ENCODE measurements at regions of chr16 and their contacts with region 1.

Region 1: GRCh38 chr16:2980227-2981086 is at the start of gene PKMYT1:
- DNase-seq: peak; percentile 63 to 98
- H3K4me3 ChIP-seq: peak within 1 kb of the TSS; percentile 80
- H3K27ac ChIP-seq: peak within 1 kb of the TSS; percentile 36; the same call in 1 of the 2 replicates
- H3K4me1 ChIP-seq: peaks cover 22% of the 10 kb centered on the region
- H3K27me3 ChIP-seq: no peaks in the 10 kb centered on the region
- CTCF ChIP-seq: no peak
- total RNA-seq, gene PKMYT1: 105 and 112 TPM in 2 replicates

Region 2: DNA sequence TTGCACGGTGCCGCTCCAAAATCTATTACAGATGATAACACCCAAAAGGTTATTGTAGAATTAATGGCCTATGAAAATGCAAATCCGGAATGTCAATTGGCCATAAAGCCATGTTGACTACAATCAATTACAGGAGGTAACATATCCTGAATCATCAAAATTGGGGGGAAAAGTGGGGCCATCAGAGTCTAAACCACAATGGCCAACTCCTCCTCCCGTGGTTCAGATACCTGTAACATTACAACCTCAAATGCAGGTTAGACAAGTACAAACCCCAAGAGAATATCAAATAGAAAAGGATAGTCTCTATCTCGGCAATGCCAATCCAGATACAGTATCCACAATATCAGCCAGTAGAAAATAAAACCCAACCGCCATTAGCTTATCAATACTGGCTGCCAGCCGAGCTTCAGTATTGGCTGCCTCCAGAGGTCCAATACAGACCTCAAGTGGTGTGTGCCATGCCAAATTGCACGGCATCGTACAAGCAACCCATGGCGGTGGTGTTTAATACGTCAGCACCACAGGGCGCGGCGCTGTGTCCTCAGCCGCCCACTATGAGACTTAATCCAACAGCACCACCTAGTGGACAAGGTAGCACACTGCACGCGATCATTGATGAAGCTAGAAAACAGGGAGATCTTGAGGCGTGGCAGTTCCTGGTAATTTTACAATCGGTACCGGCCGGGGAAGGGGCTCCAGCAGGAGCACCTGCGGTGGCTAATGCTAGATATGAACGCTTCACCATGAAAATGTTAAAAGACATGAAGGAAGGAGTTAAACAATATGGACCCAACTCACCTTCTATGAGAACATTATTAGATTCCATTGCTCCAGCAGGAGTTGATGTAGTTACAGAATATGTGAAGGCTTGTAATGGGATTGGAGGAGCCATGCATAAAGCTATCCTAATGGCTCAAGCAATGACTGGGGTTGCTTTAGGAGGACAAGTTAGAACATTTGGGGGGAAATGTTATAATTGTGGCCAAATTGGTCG is 53.5 kb before region 1 on chr16:
- CTCF ChIA-PET with region 1: no interaction called
- POLR2A ChIA-PET with region 1: no interaction called
- intact Hi-C with region 1: loop called (anchors 1 kb)
- DNase-seq: peak; percentile 70 to 84
- H3K4me3 ChIP-seq: no peak overlapping the region
- H3K27ac ChIP-seq: no peak overlapping the region
- H3K4me1 ChIP-seq: no peaks in the 10 kb centered on the region
- H3K27me3 ChIP-seq: no peaks in the 10 kb centered on the region
- CTCF ChIP-seq: peak; percentile 96

Region 3: GRCh38 chr16:2968738-2969544 is 11.5 kb before region 1 on chr16 and contains the start of gene PAQR4:
- CTCF ChIA-PET with region 1: no interaction called
- POLR2A ChIA-PET with region 1: interaction called, 3 read pairs
- intact Hi-C with region 1: loop called (anchors 2 kb)
- DNase-seq: peak; percentile 68 to 95
- H3K4me3 ChIP-seq: peak within 1 kb of the TSS; percentile 77
- H3K27ac ChIP-seq: no peak within 1 kb of the TSS
- H3K4me1 ChIP-seq: peaks cover 5% of the 10 kb centered on the region
- H3K27me3 ChIP-seq: no peaks in the 10 kb centered on the region
- CTCF ChIP-seq: no peak
- total RNA-seq, gene PAQR4: 33.6 and 40.7 TPM in 2 replicates

Region 4: GRCh38 chr16:3003582-3004302 is 23.3 kb after region 1 on chr16:
- CTCF ChIA-PET with region 1: interaction called, 3 read pairs
- POLR2A ChIA-PET with region 1: no interaction called
- intact Hi-C with region 1: loop called (anchors 1 kb)
- DNase-seq: peak; percentile 96 to 100
- H3K4me3 ChIP-seq: no peak overlapping the region; the same call in 1 of the 2 replicates
- H3K27ac ChIP-seq: no peak overlapping the region
- H3K4me1 ChIP-seq: peaks cover 33% of the 10 kb centered on the region
- H3K27me3 ChIP-seq: no peaks in the 10 kb centered on the region
- CTCF ChIP-seq: peak; percentile 61

Measured in PC-9 (cell line).